Dendritic cell treated with granulocyte-macrophage colony-stimulating factor and Interleukin-4, amounts not matched to agents 40 ng/mL and 50 ng/mL, for 4 days (primary cell): ENCODE measurements at regions of chr9 and their contacts with region 1.

Region 1: GRCh38 chr9:79955300-79955699 is 383.5 kb downstream of the TLE4 start:
- H3K4me3 Mint-ChIP-seq: no peak overlapping the region
- H3K27ac Mint-ChIP-seq: no peak overlapping the region
- H3K4me1 Mint-ChIP-seq: no peaks in the 10 kb centered on the region
- H3K27me3 Mint-ChIP-seq: no peaks in the 10 kb centered on the region

Region 2: DNA sequence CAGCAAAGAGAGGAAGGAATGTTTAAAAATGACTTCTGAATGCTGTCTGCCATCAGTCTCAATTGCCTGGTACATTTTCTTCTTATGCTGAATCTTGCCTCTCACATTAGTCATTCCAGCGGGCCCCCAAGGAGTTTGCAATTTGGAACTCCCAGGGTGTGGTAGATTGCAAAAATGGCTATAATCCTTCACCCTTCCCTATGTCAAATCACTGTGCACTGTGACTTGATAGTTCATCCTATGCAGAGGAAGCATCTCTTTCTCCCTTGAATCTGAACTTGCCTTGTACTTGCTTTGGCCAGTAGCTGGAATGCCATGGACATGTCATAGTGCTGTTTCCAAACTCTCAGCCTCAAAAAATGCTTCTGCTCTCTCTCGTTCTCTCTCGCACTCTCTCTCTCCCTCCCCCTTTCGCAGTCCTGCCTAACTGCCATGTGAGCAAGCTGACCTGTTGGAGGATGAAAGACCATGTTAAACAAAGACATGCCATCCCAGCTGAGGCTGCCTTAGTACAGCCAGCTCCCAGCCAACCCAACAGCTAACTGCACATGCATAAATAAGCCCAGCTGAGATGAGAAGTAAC is 667.5 kb before region 1 on chr9:
- intact Hi-C with region 1: loop called (anchors 10 kb)
- H3K4me3 Mint-ChIP-seq: no peak overlapping the region
- H3K27ac Mint-ChIP-seq: no peak overlapping the region
- H3K4me1 Mint-ChIP-seq: peaks cover 12% of the 10 kb centered on the region
- H3K27me3 Mint-ChIP-seq: no peaks in the 10 kb centered on the region